ENCODE measurements at regions of chr1 and their contacts with region 1.

Region 1: GRCh38 chr1:97920832-97921571 is at the start of gene DPYD:
- H3K4me3 Mint-ChIP-seq: peak within 1 kb of the TSS; percentile 95
- H3K27ac Mint-ChIP-seq: peak within 1 kb of the TSS; percentile 97
- H3K4me1 Mint-ChIP-seq: peaks cover 31% of the 10 kb centered on the region
- H3K27me3 Mint-ChIP-seq: no peaks in the 10 kb centered on the region

Region 2: DNA sequence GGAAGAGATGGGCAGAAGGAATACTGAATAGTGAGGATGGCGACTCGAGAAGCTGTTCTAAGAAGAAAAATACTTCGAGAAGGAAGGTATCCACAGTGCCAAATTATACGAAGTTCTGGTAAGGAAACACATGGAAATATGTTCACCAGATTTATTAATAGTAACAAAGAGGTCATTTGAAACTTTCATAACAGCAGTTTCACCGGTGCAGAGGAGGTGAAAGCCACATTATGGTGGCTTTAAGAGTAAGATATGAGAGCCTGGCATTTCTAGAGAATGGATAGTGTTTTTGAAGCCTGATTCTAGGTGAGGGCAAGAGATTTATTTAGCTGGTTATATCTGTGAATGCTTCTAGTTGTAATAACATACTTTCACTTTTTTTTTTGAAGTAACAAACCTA is 56.4 kb before region 1 on chr1:
- intact Hi-C with region 1: no loop called
- H3K4me3 Mint-ChIP-seq: no peak overlapping the region
- H3K27ac Mint-ChIP-seq: peak overlapping the region; percentile 73
- H3K4me1 Mint-ChIP-seq: peaks cover 32% of the 10 kb centered on the region
- H3K27me3 Mint-ChIP-seq: no peaks in the 10 kb centered on the region

Region 3: GRCh38 chr1:97883823-97884222 is 37.2 kb before region 1 on chr1:
- intact Hi-C with region 1: loop called (anchors 5 kb)
- H3K4me3 Mint-ChIP-seq: no peak overlapping the region
- H3K27ac Mint-ChIP-seq: no peak overlapping the region
- H3K4me1 Mint-ChIP-seq: peaks cover 20% of the 10 kb centered on the region
- H3K27me3 Mint-ChIP-seq: no peaks in the 10 kb centered on the region

Region 4: GRCh38 chr1:97906567-97907241 is 14.3 kb before region 1 on chr1:
- intact Hi-C with region 1: loop called (anchors 2 kb)
- H3K4me3 Mint-ChIP-seq: no peak overlapping the region
- H3K27ac Mint-ChIP-seq: no peak overlapping the region
- H3K4me1 Mint-ChIP-seq: peaks cover 28% of the 10 kb centered on the region
- H3K27me3 Mint-ChIP-seq: no peaks in the 10 kb centered on the region

Region 5: GRCh38 chr1:98068016-98068415 is 147.0 kb after region 1 on chr1:
- intact Hi-C with region 1: no loop called
- H3K4me3 Mint-ChIP-seq: no peak overlapping the region
- H3K27ac Mint-ChIP-seq: no peak overlapping the region
- H3K4me1 Mint-ChIP-seq: no peaks in the 10 kb centered on the region
- H3K27me3 Mint-ChIP-seq: no peaks in the 10 kb centered on the region